Activated T-helper 2 cell treated with anti-CD3 and anti-CD28 coated beads, Interferon-gamma antibody, Interleukin-2, Interleukin-4, amounts not matched to agents 10 μg/mL and 5 μg/mL and 100 μg/mL, durations not matched to agents 14 hours and 24 hours and 36 hours (primary cell): ENCODE measurements at regions of chr12 and their contacts with region 1.

Region 1: GRCh38 chr12:10304161-10304574 is 3.5 kb upstream of the KLRD1 start:
- DNase-seq: peak; percentile 18
- H3K4me3 Mint-ChIP-seq: no peak overlapping the region
- H3K27ac Mint-ChIP-seq: peak overlapping the region; percentile 34
- H3K4me1 Mint-ChIP-seq: peaks cover 49% of the 10 kb centered on the region
- H3K27me3 Mint-ChIP-seq: peaks cover 7% of the 10 kb centered on the region

Region 2: GRCh38 chr12:9741726-9742125 is 562.4 kb before region 1 on chr12:
- intact Hi-C with region 1: loop called (anchors 5 kb)
- DNase-seq: peak; percentile 80
- H3K4me3 Mint-ChIP-seq: peak overlapping the region; percentile 65
- H3K27ac Mint-ChIP-seq: peak overlapping the region; percentile 95
- H3K4me1 Mint-ChIP-seq: peaks cover 61% of the 10 kb centered on the region
- H3K27me3 Mint-ChIP-seq: peaks cover 1% of the 10 kb centered on the region

Region 3: DNA sequence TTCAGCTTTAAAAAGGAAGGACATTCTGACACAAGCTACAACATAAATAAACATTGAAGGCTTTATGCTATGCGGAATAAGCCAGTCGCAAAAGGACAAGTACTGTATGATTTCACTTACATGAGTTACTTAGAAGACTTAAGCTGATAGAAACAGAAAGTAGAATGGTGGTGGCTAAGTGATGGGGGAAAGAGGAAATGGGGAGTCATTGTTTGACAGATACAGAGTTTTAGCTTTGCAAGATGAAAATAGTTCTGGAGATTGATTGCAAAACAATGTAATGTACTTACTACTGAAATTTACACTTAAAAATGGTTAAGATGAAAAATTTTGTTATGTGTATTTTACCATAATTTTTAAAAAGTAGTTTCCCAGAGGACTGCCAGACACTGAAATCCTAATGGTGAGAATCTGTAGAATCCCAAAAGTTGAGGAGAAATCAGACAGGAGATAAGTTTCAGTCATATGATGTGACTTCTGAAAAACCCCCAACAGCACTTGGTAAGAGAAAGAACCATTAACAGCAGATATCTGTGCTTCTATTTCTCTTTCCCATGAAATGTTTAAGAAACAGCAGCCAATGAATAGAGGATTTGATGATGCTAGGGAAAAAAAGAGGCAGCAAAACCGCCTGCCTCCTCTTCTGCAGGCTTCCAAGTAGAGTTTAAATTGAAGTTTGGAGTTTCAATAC is 355.4 kb before region 1 on chr12:
- intact Hi-C with region 1: loop called (anchors 10 kb)
- DNase-seq: no peak
- H3K4me3 Mint-ChIP-seq: peak overlapping the region; percentile 23
- H3K27ac Mint-ChIP-seq: peak overlapping the region; percentile 53
- H3K4me1 Mint-ChIP-seq: peaks cover 57% of the 10 kb centered on the region
- H3K27me3 Mint-ChIP-seq: no peaks in the 10 kb centered on the region

Region 4: GRCh38 chr12:10285919-10286318 is 18.2 kb before region 1 on chr12:
- intact Hi-C with region 1: loop called (anchors 2 kb)
- DNase-seq: no peak
- H3K4me3 Mint-ChIP-seq: no peak overlapping the region
- H3K27ac Mint-ChIP-seq: no peak overlapping the region
- H3K4me1 Mint-ChIP-seq: peaks cover 12% of the 10 kb centered on the region
- H3K27me3 Mint-ChIP-seq: peaks cover 6% of the 10 kb centered on the region

Region 5: DNA sequence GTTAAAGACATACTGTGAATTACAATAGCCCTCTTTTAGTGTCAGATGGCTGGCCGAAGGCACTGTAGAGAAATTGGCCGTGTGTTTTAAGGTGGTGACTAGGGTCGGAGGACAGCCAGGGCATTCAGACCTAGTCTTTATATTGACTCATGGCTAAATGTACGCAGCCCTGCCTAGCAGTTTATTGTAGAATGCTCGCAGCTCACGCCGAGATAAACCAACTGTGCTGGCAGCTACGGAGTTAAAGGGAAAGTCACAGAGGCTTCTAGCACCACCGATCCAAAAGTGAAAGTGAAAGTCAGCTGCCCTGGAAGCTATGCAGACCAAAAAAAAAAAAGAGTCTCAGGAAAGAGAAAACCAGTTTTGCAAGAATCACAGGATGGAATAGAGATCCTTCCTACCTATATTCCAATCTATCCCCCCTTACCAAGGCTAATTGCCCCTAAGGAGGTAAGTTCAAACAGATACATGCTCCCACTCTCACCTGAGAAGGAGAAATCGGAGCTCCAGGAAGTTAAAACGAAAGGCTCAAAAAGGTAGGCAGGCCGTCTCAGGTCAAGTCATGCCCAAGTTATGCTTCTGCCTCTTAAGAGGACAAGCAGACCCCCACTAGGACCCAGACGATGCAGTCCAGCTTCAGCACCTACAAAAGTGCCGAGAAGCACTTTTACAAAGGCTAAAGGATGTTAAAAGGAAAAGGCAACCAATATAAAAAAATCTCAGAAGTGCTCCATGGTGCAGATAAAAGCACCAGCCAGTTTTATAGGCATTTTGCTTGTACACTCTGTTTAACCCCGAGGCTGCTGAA is 60.9 kb after region 1 on chr12:
- intact Hi-C with region 1: loop called (anchors 2 kb)
- DNase-seq: peak; percentile 51
- H3K4me3 Mint-ChIP-seq: no peak overlapping the region
- H3K27ac Mint-ChIP-seq: no peak overlapping the region
- H3K4me1 Mint-ChIP-seq: peaks cover 9% of the 10 kb centered on the region
- H3K27me3 Mint-ChIP-seq: peaks cover 27% of the 10 kb centered on the region